Activated CD8-positive, alpha-beta T cell treated with anti-CD3 and anti-CD28 coated beads, Interleukin-2, amount 10 ng/mL, durations not matched to agents 7 days and 5 days (primary cell): ENCODE measurements at regions of chr10 and their contacts with region 1.

Region 1: DNA sequence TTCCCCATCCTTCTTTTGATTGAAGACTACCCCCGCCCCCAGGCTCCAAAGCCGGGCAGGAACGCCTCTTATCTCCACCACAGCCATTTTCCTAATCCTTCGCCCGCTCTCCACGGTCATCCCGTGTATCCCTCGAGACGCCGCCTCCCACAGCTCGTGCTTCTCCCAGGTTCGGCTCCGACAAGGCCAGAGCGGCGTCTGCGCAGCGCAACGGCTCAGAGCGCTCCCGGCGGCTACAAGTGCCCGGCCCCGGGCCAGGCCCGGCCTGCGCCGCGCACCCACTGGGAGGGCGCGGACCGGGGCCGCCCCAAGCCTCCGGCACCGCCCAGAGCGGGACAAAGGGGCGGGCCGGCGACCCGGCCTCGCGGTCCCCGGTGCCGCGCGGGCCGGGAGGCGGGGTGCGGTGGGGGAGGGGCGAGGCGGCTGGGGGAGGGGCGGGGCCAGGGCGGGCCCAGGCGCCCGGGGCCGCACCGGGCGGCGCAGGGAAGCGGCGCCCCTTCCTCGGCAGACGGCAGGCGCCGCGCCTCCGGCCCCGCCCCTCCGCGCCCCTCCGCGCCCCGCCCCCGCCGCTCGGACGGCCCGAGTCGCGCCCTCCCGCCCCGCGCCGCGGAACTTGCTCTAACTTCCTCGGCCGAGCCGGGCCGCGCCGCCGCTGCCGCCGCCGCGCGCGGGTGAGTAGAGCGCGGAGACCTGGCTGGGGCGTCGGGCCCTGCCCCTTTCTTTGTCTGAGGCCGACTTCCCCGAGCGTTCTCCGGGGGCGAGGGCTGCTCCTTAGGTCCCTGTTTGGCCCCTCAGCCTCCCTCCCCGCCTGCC is at the start of gene TSPAN14:
- DNase-seq: peak; percentile 79
- ATAC-seq: peak; percentile 80
- H3K4me3 Mint-ChIP-seq: peak within 1 kb of the TSS; percentile 99
- H3K27ac Mint-ChIP-seq: peak within 1 kb of the TSS; percentile 90
- H3K4me1 Mint-ChIP-seq: peaks cover 37% of the 10 kb centered on the region
- H3K27me3 Mint-ChIP-seq: peaks cover 1% of the 10 kb centered on the region
- total RNA-seq, gene TSPAN14: 109 to 117 TPM

Region 2: DNA sequence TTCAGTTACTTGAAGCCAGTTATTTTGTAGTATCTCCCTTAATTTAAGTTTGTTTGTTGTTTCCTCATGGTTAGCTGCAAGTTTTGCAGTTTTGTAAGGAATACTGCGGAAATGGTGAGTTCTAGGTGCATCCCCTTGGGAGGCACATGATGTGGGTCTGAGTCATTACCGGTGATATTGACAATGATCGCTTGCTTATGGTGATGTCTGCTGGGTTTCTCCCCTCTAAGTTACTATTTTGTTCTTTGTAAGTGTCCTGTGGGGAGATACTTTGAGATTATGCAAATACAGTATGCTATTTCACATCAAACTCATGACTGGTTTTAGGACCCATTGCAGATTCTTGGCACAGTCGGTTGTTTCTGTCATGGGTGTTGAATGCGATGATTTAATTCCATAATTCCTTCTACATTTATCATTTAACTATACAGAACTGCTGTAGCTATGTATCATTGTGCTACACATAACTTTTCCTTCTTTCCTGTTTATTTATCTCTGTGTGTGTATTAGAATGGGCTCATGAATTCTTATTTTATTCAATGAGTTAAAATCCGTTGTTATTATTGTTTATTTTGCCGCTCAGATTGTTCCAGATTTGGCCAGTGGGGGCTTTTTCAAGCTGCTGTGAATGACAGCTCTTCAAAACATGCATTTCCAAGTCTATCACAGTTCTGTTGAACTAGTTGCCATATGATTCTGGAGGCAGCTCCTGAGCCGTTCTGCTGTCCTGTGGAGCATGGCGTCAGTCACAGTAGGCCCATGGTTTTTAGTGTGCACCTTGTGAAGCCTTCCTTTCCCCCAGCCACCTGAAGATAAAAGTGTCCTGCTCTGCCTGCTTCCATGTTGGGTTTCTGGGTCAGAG is 18.6 kb after region 1 on chr10:
- CTCF ChIA-PET with region 1: interaction called, 175 read pairs
- POLR2A ChIA-PET with region 1: interaction called, 86 read pairs
- DNase-seq: no peak
- ATAC-seq: peak; percentile 40
- H3K4me3 Mint-ChIP-seq: peak overlapping the region; percentile 43
- H3K27ac Mint-ChIP-seq: peak overlapping the region; percentile 77
- H3K4me1 Mint-ChIP-seq: peaks cover 88% of the 10 kb centered on the region
- H3K27me3 Mint-ChIP-seq: no peaks in the 10 kb centered on the region

Region 3: DNA sequence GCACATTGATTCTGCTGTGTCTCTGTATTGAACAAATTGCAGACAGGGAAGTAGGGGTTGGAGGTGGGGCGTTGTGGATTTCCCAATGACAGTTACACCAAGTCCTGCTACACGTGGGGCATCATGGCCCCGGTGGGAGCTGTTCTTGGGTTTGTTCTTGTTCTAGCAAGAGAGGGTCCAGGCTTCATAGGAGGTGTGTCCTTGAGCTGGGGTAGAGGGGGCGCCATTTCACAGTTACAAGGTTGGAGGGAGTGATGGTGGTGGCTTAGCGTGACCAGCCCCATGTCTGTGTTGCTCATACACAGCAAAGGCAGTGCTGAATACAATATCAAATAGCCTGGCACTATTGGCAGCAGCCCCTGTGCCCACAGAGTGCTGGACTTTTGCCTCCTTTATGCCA is 99.5 kb after region 1 on chr10:
- CTCF ChIA-PET with region 1: no interaction called
- POLR2A ChIA-PET with region 1: no interaction called
- DNase-seq: peak; percentile 3
- ATAC-seq: no peak
- H3K4me3 Mint-ChIP-seq: no peak overlapping the region
- H3K27ac Mint-ChIP-seq: no peak overlapping the region
- H3K4me1 Mint-ChIP-seq: no peaks in the 10 kb centered on the region
- H3K27me3 Mint-ChIP-seq: peaks cover 14% of the 10 kb centered on the region